Endothelial cell of umbilical vein (primary cell): ENCODE measurements at regions of chr12 and their contacts with region 1.

Region 1: DNA sequence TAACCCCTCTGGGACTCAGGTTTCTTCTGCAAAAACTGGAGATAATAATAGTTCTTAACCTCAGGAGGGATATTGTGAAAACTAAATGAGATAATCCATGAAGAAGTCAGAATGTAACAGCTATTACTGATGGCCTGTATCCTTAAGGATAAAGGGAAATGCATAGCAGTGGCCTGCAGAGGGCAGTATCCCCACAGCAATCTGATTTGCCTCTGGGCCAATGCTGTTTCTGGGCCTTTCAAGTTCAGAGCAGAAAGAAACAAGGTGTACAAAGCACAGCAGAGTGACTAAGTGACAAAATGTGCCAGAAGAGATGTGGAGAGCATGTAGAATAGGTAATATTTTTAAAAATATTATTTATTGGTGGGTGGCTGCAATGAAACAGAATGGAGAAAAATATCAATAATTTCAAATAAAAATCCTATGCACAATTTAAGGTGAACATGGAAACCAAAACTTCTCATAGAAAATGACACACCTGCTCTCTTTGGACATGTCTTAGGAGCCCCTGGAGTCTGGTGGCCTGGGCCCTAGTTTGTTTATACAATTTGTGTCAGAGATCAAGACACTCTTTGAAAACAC is 90.3 kb downstream of the C12orf75 start:
- DNase-seq: peak; percentile 90
- H3K4me3 ChIP-seq: no peak overlapping the region
- H3K27ac ChIP-seq: peak overlapping the region; percentile 20
- H3K4me1 ChIP-seq: peaks cover 7% of the 10 kb centered on the region
- H3K27me3 ChIP-seq: no peaks in the 10 kb centered on the region
- CTCF ChIP-seq: peak; percentile 70 to 90
- POLR2A ChIP-seq: no peak

Region 2: DNA sequence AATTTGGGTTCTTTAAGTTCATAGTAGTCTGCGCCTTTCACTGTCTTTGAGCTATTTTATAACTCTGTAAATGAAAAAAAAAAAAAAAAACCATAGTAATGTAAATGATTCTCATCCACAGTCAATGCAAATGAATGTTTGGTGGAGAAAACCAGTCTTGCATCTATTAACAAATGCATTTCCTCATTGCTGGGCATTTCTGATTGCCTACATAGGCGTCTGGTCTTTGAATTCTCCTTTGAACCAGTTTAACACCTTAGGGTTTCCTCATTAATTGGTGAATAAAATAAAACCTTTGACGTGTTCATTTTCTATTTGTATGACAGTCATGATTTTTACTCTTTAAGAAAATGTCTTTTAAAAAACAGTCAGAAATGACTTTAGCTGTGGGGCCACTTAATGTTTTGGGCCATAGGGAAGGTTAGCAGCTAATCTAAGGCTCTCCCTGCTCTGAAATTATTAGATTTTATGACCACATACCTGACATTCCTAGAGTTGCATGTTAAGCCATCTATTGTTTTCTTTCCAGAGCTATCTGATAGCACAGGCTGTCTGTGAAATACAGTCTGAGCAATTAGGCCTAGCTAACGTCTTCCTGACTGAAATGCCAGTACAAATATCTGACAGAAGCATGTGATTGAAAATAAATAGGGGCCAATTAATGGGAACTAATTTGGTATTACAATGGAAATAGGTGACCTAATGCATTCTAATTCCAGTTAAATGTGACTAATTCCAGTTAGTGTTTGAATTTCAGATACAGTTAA is 24.7 kb after region 1 on chr12:
- CTCF ChIA-PET with region 1: interaction called, 19 read pairs
- POLR2A ChIA-PET with region 1: no interaction called
- dilution Hi-C with region 1: no loop called
- intact Hi-C with region 1: loop called (anchors 1 kb)
- DNase-seq: peak; percentile 98
- H3K4me3 ChIP-seq: no peak overlapping the region
- H3K27ac ChIP-seq: peak overlapping the region; percentile 98
- H3K4me1 ChIP-seq: peaks cover 29% of the 10 kb centered on the region
- H3K27me3 ChIP-seq: no peaks in the 10 kb centered on the region
- CTCF ChIP-seq: no peak
- POLR2A ChIP-seq: peak; percentile 86

Region 3: GRCh38 chr12:105485321-105485910 is 64.7 kb after region 1 on chr12:
- CTCF ChIA-PET with region 1: interaction called, 36 read pairs
- POLR2A ChIA-PET with region 1: interaction called, 3 read pairs
- dilution Hi-C with region 1: no loop called
- intact Hi-C with region 1: loop called (anchors 1 kb)
- DNase-seq: peak; percentile 99
- H3K4me3 ChIP-seq: no peak overlapping the region
- H3K27ac ChIP-seq: peak overlapping the region; percentile 74
- H3K4me1 ChIP-seq: peaks cover 100% of the 10 kb centered on the region
- H3K27me3 ChIP-seq: no peaks in the 10 kb centered on the region
- CTCF ChIP-seq: no peak
- POLR2A ChIP-seq: peak; percentile 90

Region 4: GRCh38 chr12:105555556-105556295 is 135.0 kb after region 1 on chr12:
- CTCF ChIA-PET with region 1: interaction called, 17 read pairs
- POLR2A ChIA-PET with region 1: no interaction called
- dilution Hi-C with region 1: no loop called
- intact Hi-C with region 1: loop called (anchors 1 kb)
- DNase-seq: peak; percentile 63
- H3K4me3 ChIP-seq: no peak overlapping the region
- H3K27ac ChIP-seq: peak overlapping the region; percentile 9
- H3K4me1 ChIP-seq: peaks cover 32% of the 10 kb centered on the region
- H3K27me3 ChIP-seq: no peaks in the 10 kb centered on the region
- CTCF ChIP-seq: no peak
- POLR2A ChIP-seq: no peak

Region 5: DNA sequence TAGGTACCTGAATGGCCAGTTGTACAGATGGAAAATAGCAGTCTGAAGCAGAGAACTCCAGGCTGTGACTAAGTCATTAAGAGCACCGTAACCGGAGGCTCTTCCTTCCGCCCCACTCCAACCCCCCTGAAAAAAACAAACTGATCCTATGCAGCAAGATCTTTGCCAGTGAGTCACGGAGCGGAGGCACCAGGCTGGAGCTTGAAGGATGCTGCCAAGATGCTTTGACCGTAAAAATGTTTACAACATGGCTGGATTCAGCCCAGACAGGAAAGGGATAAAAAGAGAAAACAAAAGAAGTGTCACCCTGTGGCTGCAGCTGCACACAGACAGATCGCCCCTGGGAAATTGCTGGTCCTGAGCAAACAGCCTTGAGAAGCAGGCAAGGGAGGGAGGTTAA is 513.5 kb after region 1 on chr12:
- CTCF ChIA-PET with region 1: interaction called, 3 read pairs
- POLR2A ChIA-PET with region 1: no interaction called
- dilution Hi-C with region 1: no loop called
- intact Hi-C with region 1: loop called (anchors 2 kb)
- DNase-seq: peak; percentile 96
- H3K4me3 ChIP-seq: no peak overlapping the region
- H3K27ac ChIP-seq: peak overlapping the region; percentile 90
- H3K4me1 ChIP-seq: peaks cover 35% of the 10 kb centered on the region
- H3K27me3 ChIP-seq: no peaks in the 10 kb centered on the region
- CTCF ChIP-seq: no peak
- POLR2A ChIP-seq: no peak

Region 6: DNA sequence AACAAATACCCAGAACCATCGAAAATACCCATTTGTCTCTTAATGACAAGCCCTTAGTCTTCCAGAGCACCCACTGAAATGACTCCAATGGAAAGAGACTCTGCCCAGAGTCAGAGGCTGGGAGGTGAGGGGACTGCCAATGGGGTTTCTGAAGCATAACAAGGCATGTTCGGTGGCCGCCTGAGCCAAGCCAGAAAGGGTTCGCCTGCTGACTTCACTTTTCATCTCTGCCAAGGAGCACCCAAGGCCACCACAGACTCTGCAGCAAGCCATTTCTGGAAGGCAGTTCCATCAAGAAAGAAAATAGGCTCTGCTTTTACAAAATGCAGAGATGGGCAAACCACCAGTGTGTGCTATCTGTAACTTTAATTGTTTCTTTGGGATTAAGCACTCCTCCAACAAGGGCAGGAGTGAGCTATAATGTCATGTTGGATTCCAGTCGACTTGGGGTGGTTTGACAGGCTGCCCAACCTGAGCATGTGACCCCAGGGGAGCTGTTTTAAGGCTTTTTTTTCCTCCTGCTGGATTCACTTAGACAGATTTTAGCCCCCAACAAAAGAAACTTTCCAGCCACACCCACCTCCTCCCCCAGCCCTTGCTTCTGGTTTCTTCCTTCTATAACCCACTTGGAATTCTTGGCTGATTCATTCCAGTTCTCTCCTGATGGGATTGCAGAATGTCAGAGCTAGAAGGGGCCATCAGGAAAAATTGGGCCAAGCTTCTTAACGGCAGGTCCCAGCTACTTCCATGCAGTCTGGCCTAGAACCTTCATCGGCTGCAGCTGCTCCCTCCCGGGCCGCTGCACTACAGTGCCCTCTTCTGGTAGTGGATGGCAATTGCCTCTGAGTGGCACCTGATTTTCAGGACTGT is 803.0 kb after region 1 on chr12:
- CTCF ChIA-PET with region 1: interaction called, 47 read pairs
- POLR2A ChIA-PET with region 1: no interaction called
- dilution Hi-C with region 1: no loop called
- intact Hi-C with region 1: loop called (anchors 1 kb)
- DNase-seq: peak; percentile 75
- H3K4me3 ChIP-seq: no peak overlapping the region
- H3K27ac ChIP-seq: no peak overlapping the region
- H3K4me1 ChIP-seq: no peaks in the 10 kb centered on the region
- H3K27me3 ChIP-seq: peaks cover 9 to 13% of the 10 kb centered on the region in 2 experiments
- CTCF ChIP-seq: peak; percentile 89 to 93
- POLR2A ChIP-seq: no peak